Activated CD4-positive, alpha-beta T cell treated with anti-CD3 and anti-CD28 coated beads, Interleukin-2, amount 10 ng/mL, durations not matched to agents 24 days and 14 days (primary cell): ENCODE measurements at regions of chr10 and their contacts with region 1.

Region 1: GRCh38 chr10:62050893-62051433 is 149.5 kb downstream of the ARID5B start:
- DNase-seq: peak; percentile 93
- H3K4me3 Mint-ChIP-seq: peak overlapping the region; percentile 97
- H3K27ac Mint-ChIP-seq: peak overlapping the region; percentile 99
- H3K4me1 Mint-ChIP-seq: peaks cover 79% of the 10 kb centered on the region
- H3K27me3 Mint-ChIP-seq: no peaks in the 10 kb centered on the region

Region 2: GRCh38 chr10:61812052-61812721 is 238.8 kb before region 1 on chr10:
- intact Hi-C with region 1: no loop called
- DNase-seq: no peak
- H3K4me3 Mint-ChIP-seq: no peak overlapping the region
- H3K27ac Mint-ChIP-seq: no peak overlapping the region
- H3K4me1 Mint-ChIP-seq: peaks cover 3% of the 10 kb centered on the region
- H3K27me3 Mint-ChIP-seq: peaks cover 2% of the 10 kb centered on the region

Region 3: GRCh38 chr10:61903221-61903927 is 147.6 kb before region 1 on chr10:
- intact Hi-C with region 1: loop called (anchors 1 kb)
- DNase-seq: peak; percentile 92
- H3K4me3 Mint-ChIP-seq: peak overlapping the region; percentile 92
- H3K27ac Mint-ChIP-seq: peak overlapping the region; percentile 95
- H3K4me1 Mint-ChIP-seq: peaks cover 36% of the 10 kb centered on the region
- H3K27me3 Mint-ChIP-seq: no peaks in the 10 kb centered on the region

Region 4: DNA sequence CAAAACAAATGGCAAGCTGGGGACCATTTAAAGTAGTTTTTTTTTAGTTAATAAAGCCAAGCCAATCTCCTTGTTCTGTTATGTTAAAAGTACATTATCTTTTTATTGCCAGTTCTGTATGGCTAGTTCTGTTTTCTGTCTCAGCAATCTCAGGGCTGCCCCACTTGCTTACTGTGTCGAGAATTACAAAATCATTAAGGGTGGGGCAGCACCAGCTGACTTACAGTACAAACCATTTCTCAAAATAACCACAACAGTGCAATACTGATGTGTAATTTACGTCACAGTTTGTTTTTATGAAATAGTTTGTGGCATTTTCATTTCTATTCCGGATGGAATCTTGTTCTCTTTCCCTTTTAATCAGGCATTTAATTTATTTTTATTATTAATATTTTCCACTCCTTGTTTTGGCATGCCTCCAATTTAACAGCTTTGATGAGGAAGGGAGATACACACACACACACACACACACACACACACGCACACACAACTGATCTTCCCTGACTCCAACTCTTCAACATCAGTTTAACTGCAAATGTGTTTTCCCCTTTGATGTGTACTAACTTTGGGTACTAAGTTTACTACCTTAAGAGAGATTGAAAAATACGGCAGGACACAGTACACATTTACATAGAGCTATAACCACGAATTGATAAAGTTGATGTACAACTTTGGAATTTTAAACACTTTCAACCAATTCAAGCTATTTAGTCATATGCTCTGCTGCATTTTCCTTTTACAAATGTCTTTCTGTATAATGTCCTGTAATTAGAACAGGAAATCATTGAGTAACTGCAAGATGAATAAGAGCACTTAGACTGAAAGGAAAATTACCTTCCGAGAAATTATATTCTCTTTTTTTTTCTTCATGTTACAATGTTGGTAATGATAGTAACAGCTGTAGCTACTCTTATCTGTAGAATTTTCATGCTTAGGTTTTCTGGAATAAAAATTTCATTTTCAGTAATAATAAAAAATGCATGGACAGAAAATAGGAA is 58.0 kb before region 1 on chr10:
- intact Hi-C with region 1: loop called (anchors 1 kb)
- DNase-seq: peak; percentile 91
- H3K4me3 Mint-ChIP-seq: peak overlapping the region; percentile 77
- H3K27ac Mint-ChIP-seq: peak overlapping the region; percentile 93
- H3K4me1 Mint-ChIP-seq: peaks cover 65% of the 10 kb centered on the region
- H3K27me3 Mint-ChIP-seq: no peaks in the 10 kb centered on the region

Region 5: GRCh38 chr10:62082729-62083411 is 31.9 kb after region 1 on chr10:
- intact Hi-C with region 1: loop called (anchors 2 kb)
- DNase-seq: peak; percentile 84
- H3K4me3 Mint-ChIP-seq: peak overlapping the region; percentile 80
- H3K27ac Mint-ChIP-seq: peak overlapping the region; percentile 92
- H3K4me1 Mint-ChIP-seq: peaks cover 71% of the 10 kb centered on the region
- H3K27me3 Mint-ChIP-seq: no peaks in the 10 kb centered on the region

Region 6: GRCh38 chr10:62637249-62638061 is 586.5 kb after region 1 on chr10:
- intact Hi-C with region 1: loop called (anchors 5 kb)
- DNase-seq: peak; percentile 92
- H3K4me3 Mint-ChIP-seq: no peak overlapping the region
- H3K27ac Mint-ChIP-seq: no peak overlapping the region
- H3K4me1 Mint-ChIP-seq: peaks cover 22% of the 10 kb centered on the region
- H3K27me3 Mint-ChIP-seq: no peaks in the 10 kb centered on the region

Region 7: GRCh38 chr10:62851442-62851841 is 800.5 kb after region 1 on chr10:
- intact Hi-C with region 1: loop called (anchors 2 kb)
- DNase-seq: peak; percentile 68
- H3K4me3 Mint-ChIP-seq: no peak overlapping the region
- H3K27ac Mint-ChIP-seq: peak overlapping the region; percentile 3
- H3K4me1 Mint-ChIP-seq: peaks cover 52% of the 10 kb centered on the region
- H3K27me3 Mint-ChIP-seq: no peaks in the 10 kb centered on the region